Activated T-helper 1 cell treated with anti-CD3 and anti-CD28 coated beads, Interleukin-12 subunit alpha, Interleukin-12 subunit beta, Interleukin-2, Interleukin-4 antibody, amounts not matched to agents 30 ng/mL and 10 ng/mL and 1 ng/mL, durations not matched to agents 14 hours and 24 hours and 36 hours (primary cell): ENCODE measurements at regions of chr6 and their contacts with region 1.

Region 1: DNA sequence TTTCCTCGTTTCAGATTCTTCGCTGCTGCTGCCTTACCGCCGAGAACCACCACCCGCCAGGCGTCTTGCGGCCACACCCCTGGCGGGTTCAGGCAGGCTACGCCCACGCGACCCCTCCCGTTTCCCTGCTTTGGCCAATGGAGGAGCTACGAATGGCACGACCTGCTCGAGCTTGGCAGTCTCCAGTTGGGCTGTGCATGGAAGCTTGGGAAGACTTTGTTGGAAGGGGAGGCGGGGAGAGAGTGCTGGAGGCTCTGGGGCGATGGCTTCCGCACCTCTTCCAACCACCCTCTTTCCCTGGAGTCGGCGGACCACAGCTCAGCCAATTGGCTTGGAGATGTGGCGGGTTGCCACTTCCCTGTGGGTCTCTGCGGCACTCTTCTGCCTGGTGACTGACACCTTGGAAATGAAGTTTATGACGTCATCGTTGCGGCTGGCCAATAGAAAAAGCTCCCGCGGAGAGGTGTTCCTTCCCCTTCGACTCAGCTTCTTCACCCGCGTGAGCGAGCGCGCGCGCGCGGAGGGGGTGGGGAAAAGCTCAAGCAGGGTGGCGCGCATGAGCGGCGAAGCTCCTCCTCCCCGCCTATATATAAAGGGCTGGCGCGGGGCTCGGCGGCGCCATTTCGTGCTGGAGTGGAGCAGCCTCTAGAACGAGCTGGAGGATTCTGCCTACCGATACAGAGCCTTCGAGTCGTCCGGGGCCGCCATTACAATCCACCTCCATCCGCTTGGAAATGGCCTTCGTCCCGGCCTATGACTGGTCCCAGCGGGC is 3.4 kb downstream of the BRD2 start:
- DNase-seq: peak; percentile 99
- H3K4me3 Mint-ChIP-seq: peak overlapping the region; percentile 96
- H3K27ac Mint-ChIP-seq: peak overlapping the region; percentile 98
- H3K4me1 Mint-ChIP-seq: peaks cover 32% of the 10 kb centered on the region
- H3K27me3 Mint-ChIP-seq: peaks cover 4% of the 10 kb centered on the region

Region 2: DNA sequence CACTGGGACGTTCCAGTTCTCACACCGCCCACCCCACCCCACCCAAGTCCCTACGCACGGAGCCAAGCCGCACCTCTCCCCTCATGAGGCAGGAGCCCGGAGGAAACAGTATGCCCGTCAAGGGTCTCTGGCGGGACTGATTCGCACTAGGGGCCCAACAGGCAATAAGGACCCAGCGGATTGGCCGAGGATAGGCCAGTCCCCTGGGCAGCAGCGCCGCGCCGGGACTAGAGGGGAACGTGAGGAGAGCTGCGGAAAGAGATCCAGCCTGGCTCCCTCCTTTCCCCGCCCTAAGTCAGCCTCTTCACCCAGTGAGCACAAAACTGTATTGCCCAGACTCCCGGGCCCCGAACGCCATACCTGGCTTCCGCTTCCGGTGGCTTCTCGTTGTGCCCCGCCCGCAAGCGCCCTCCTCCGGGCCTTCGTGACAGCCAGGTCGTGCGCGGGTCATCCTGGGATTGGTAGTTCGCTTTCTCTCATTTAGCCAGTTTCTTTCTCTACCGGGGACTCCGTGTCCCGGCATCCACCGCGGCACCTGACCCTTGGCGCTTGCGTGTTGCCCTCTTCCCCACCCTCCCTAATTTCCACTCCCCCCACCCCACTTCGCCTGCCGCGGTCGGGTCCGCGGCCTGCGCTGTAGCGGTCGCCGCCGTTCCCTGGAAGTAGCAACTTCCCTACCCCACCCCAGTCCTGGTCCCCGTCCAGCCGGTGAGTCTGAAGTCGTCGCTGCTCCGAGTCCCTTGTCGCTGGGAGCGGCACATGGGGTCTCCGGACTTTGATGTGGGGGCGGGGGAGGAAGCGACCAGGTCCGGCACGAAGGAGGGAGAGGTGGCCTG is 1306.0 kb before region 1 on chr6 and contains the start of gene CSNK2B:
- intact Hi-C with region 1: loop called (anchors 10 kb)
- DNase-seq: peak; percentile 98
- H3K4me3 Mint-ChIP-seq: peak within 1 kb of the TSS; percentile 98
- H3K27ac Mint-ChIP-seq: peak within 1 kb of the TSS; percentile 90
- H3K4me1 Mint-ChIP-seq: peaks cover 74% of the 10 kb centered on the region
- H3K27me3 Mint-ChIP-seq: no peaks in the 10 kb centered on the region
- total RNA-seq, gene CSNK2B: 302 and 308 TPM in 2 replicates

Region 3: DNA sequence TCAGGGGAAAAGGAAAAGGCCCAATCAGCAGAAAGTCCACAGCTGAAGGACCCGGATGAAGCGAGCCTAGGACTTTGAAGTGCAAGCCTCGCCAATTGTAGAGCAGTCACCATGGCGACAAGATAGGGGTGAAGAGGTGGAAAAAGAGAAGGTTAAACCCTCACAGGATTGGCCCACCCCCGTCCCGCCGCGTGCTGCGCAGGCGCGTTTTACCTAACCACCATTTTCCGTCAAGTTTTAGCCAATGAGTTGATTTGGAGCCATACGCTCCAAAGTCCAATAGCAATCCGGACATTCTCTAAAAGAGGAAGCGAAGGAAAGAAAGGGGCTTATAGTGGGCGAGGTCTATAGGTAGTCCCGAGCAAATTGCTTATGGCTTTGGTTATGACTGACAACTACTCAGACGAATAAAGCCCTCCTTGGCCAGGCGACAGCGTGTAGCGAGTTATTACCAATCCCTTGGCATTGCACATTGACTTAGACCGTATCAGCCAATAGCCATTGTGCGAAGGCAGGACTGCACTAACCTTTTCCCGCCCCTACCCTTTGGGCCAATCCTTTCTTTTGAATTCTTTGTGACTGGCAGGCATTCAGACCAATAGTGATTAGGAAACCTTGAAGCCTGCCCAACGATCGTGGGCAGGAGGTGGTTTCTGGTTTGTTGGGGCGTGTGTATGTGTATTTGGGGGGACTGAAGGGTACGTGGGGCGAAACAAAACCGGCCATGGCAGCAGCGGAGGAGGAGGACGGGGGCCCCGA is 793.8 kb before region 1 on chr6 and contains the start of gene RNF5:
- intact Hi-C with region 1: loop called (anchors 2 kb)
- DNase-seq: peak; percentile 91
- H3K4me3 Mint-ChIP-seq: peak within 1 kb of the TSS; percentile 95
- H3K27ac Mint-ChIP-seq: peak within 1 kb of the TSS; percentile 94
- H3K4me1 Mint-ChIP-seq: peaks cover 60% of the 10 kb centered on the region
- H3K27me3 Mint-ChIP-seq: no peaks in the 10 kb centered on the region
- total RNA-seq, gene RNF5: 58.1 and 60.4 TPM in 2 replicates

Region 4: GRCh38 chr6:32853541-32854375 is 118.0 kb before region 1 on chr6 and contains the starts of genes PSMB9 and TAP1:
- intact Hi-C with region 1: loop called (anchors 1 kb)
- DNase-seq: peak; percentile 92
- H3K4me3 Mint-ChIP-seq: peak within 1 kb of the TSS; percentile 98
- H3K27ac Mint-ChIP-seq: peak within 1 kb of the TSS; percentile 99
- H3K4me1 Mint-ChIP-seq: peaks cover 71% of the 10 kb centered on the region
- H3K27me3 Mint-ChIP-seq: no peaks in the 10 kb centered on the region
- total RNA-seq, gene PSMB9: 249 and 253 TPM in 2 replicates
- total RNA-seq, gene TAP1: 284 and 290 TPM in 2 replicates

Region 5: DNA sequence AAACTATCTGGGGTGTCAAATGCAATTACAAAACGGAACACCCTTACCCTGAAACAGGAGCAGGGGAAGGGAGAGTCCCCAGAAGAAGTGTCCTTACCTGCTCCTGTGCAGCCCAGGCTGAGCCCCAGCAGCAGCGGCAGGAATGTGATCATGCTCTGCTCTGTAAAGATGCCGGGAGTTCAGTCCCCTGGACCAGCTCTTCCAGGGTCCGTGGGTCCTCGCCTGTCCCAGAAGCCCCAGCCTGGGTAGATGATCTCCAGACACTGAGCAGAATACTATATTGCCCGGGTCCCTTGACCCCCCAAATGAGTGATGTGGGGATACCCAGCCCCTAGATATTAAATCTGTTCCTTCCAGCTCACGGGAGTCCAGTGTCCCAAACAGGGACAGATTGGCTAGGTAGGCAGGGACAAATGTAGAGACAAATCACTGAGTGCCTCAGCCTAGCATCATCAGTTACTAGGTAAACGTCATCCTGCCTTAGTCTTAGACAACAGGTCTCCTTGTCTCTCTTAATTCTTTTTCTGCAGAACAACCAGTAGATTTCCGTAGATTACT is 31.0 kb before region 1 on chr6 and contains the start of gene HLA-DMB:
- intact Hi-C with region 1: loop called (anchors 1 kb)
- DNase-seq: peak; percentile 52
- H3K4me3 Mint-ChIP-seq: peak within 1 kb of the TSS; percentile 80
- H3K27ac Mint-ChIP-seq: peak within 1 kb of the TSS; percentile 91
- H3K4me1 Mint-ChIP-seq: peaks cover 59% of the 10 kb centered on the region
- H3K27me3 Mint-ChIP-seq: peaks cover 4% of the 10 kb centered on the region
- total RNA-seq, gene HLA-DMB: 2.7 and 2.8 TPM in 2 replicates

Region 6: DNA sequence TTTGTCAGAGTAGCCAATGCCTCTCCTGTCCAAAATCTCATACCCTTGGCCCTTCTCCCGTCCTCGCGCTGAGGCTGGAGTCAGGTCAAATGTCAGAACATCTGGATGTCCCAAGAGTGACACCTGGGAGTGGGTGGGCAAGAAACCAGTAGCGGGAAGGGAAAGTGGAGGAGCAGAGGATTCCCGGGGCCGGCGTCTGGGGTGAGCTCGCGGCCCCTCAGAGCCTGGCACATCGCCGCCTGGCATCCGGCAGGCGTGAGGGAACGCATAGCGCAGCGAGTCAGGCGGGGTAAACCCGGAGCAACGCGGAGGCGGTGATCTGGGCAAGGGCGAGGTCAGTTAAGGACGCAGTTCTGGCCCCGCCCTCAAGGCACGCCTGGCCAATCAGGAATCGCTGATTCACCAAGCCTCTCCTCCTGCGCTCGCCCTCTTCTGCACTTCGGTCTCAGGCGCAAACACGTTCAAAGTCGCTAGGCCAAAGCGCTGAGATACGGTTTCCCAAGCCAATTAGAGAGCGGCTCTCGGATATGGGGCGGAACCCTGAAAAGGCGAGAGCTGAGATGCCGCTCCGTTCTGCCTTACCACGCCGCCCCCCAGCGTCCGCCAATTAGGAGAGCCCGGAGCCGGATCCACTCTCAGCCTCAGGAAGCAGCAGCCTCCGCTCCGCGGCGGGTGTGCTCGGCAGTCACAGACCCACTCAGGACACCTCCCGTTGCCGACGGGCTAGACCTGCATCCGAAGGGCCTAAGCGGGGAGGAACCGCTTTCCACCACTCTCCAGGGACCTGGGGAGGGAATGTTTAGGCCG is 277.4 kb after region 1 on chr6:
- intact Hi-C with region 1: loop called (anchors 1 kb)
- DNase-seq: peak; percentile 95
- H3K4me3 Mint-ChIP-seq: peak overlapping the region; percentile 91
- H3K27ac Mint-ChIP-seq: peak overlapping the region; percentile 84
- H3K4me1 Mint-ChIP-seq: peaks cover 44% of the 10 kb centered on the region
- H3K27me3 Mint-ChIP-seq: peaks cover 4% of the 10 kb centered on the region

Region 7: DNA sequence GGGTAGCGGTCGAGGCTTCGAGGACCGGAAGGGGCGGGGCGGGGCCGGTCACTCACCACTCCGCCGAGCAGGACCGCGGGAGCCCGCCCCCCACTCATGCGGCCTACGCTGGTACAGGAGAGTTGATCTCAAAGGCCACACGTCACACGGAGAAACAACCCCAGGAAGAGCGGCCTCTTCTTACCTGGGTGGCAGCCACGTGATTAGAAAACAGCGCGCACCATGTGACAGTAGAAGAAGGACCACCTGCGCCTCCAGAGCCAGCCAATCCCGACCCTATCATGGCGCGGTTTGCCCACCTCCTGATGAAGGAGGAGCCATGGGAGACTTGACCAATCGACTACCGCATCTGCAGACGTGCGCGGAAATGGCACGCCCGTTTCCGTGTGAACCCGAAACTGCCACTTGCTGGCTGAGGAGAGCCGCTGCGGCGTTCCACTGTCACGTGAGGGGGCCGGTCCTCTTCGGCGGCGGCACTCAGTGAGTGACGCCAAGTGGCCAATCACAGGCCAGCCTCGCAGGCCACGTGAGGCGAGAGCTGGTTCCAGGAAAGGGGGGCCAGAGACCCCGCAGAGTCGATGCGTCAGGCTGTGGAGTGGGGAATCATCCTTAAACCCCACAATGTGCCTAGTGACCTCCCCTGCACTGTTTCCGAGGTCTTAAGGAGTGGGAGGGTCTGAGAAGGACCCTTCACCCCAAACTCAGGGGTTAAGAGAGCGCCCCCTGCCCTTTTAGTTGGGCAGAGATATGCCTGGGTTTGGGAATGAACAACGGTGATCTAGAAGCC is 446.3 kb after region 1 on chr6 and contains the start of gene CUTA:
- intact Hi-C with region 1: loop called (anchors 2 kb)
- DNase-seq: peak; percentile 98
- H3K4me3 Mint-ChIP-seq: peak within 1 kb of the TSS; percentile 95
- H3K27ac Mint-ChIP-seq: peak within 1 kb of the TSS; percentile 96
- H3K4me1 Mint-ChIP-seq: peaks cover 70% of the 10 kb centered on the region
- H3K27me3 Mint-ChIP-seq: no peaks in the 10 kb centered on the region
- total RNA-seq, gene CUTA: 131 and 137 TPM in 2 replicates